Natural killer cell (primary cell): ENCODE measurements at regions of chr5 and their contacts with region 1.

Region 1: DNA sequence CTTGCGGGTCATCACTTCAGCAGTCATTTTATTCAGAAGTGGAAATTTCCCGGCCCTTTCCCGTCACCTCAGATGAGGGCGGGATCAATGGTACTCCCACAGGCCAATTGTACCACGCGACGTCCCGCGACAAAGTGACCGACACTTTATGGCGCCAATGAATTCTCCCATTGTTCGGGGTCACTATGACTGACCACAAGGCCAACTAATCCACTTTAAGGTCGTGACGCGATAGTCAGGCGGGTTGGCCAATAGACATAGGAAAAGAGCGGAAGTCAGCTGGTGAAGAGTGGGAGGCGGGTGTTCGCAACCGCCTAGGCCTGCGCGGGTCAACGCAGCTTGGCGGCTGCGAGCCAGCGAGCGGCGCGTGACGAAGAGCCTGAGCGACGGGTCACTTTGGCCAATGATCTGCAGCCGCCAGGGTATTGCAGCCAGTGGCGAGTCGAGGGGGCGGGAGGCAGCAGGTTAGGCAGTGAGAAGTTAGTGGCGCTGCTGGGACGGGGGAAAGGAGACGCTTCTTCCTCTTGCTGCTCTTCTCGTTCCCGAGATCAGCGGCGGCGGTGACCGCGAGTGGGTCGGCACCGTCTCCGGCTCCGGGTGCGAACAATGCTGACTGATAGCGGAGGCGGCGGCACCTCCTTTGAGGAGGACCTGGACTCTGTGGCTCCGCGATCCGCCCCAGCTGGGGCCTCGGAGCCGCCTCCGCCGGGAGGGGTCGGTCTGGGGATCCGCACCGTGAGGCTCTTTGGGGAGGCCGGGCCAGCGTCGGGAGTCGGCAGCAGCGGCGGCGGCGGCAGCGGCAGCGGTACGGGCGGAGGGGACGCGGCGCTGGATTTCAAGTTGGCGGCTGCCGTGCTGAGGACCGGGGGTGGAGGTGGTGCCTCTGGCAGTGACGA is at the start of gene ANKHD1:
- DNase-seq: peak; percentile 94 to 99
- ATAC-seq: peak; percentile 80 to 93 (median 81)
- H3K4me3 ChIP-seq: peak within 1 kb of the TSS; percentile 72
- H3K4me3 Mint-ChIP-seq: no peak within 1 kb of the TSS
- H3K27ac ChIP-seq: peak within 1 kb of the TSS; percentile 94
- H3K27ac Mint-ChIP-seq: no peak within 1 kb of the TSS
- H3K4me1 ChIP-seq: peaks cover 20% of the 10 kb centered on the region
- H3K4me1 Mint-ChIP-seq: peaks cover 26 to 35% of the 10 kb centered on the region in 2 donors
- H3K27me3 ChIP-seq: no peaks in the 10 kb centered on the region
- H3K27me3 Mint-ChIP-seq: no peaks in the 10 kb centered on the region
- CTCF ChIP-seq: no peak
- total RNA-seq, gene ANKHD1: 225 to 239 (median 230) TPM

Region 2: DNA sequence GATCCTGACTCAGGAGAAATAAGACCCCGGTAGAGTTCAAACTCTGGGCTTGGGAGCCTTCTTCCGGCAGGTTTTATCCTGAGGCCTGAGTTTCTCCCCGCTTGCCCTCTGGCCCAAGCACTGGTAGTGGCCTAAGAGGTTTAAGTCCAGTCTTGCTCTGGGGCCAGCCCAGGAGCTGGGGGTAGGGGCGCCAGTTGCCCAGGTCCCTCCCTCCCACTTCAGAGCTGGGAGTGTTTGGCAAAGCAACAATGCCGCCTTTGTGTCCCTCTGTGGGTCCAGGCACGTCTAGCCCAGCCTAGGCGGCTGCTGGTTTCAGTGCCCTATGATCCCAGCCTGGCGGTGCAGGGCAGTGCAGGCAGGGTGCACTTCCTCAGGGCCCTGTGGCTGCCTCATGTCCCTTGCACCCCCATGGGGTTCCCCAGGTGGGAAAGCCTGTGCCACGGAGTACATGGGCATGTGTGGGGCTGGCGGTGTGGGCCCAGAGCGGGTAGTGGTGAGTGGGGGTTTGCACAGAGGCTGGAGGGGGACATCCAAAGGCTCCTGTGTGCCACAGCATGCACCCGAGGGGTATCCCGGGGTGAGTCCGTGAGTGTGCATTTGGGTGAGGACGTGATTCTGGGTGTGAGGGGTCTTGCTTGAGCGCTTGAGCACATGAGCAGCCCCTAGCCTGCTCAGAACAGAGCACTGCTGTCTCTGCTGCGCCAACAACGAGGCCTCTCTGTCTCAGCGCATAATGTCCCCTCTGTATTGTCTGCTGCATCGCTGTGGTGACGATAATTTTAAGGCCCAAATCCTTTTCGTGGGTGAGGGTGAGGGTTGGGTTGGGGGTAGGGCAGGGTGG is 667.7 kb before region 1 on chr5:
- intact Hi-C with region 1: no loop called
- DNase-seq: no peak
- ATAC-seq: peak in 1 of 3 donors; percentile 8
- H3K4me3 ChIP-seq: no peak overlapping the region
- H3K4me3 Mint-ChIP-seq: no peak overlapping the region
- H3K27ac ChIP-seq: no peak overlapping the region
- H3K27ac Mint-ChIP-seq: no peak overlapping the region
- H3K4me1 ChIP-seq: no peaks in the 10 kb centered on the region
- H3K4me1 Mint-ChIP-seq: peaks cover 3% of the 10 kb centered on the region in 2 donors
- H3K27me3 ChIP-seq: no peaks in the 10 kb centered on the region
- H3K27me3 Mint-ChIP-seq: no peaks in the 10 kb centered on the region
- CTCF ChIP-seq: no peak

Region 3: DNA sequence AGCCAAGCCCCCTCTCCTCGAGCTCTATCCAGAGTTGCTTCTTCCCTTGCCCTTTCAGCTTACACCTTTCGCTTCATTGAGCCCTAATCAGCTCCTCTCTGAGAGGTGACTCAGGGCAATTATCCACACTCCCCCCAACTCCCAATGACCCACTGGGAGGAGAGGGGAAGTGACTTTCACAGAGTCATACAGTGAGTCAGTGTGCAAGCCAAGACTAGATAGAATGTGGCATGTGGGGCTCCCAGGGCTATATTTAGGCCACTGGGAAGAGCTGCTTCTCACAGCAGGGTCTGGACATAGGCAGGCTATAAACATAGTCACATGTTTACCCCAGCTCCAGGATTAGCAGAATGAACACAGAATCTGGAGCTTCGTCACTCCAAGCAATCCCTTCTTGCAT is 415.9 kb before region 1 on chr5:
- intact Hi-C with region 1: no loop called
- DNase-seq: no peak
- ATAC-seq: no peak
- H3K4me3 ChIP-seq: no peak overlapping the region
- H3K4me3 Mint-ChIP-seq: no peak overlapping the region
- H3K27ac ChIP-seq: no peak overlapping the region
- H3K27ac Mint-ChIP-seq: no peak overlapping the region
- H3K4me1 ChIP-seq: no peaks in the 10 kb centered on the region
- H3K4me1 Mint-ChIP-seq: no peaks in the 10 kb centered on the region
- H3K27me3 ChIP-seq: no peaks in the 10 kb centered on the region
- H3K27me3 Mint-ChIP-seq: peaks cover 15 to 34% of the 10 kb centered on the region in 2 donors
- CTCF ChIP-seq: no peak

Region 4: DNA sequence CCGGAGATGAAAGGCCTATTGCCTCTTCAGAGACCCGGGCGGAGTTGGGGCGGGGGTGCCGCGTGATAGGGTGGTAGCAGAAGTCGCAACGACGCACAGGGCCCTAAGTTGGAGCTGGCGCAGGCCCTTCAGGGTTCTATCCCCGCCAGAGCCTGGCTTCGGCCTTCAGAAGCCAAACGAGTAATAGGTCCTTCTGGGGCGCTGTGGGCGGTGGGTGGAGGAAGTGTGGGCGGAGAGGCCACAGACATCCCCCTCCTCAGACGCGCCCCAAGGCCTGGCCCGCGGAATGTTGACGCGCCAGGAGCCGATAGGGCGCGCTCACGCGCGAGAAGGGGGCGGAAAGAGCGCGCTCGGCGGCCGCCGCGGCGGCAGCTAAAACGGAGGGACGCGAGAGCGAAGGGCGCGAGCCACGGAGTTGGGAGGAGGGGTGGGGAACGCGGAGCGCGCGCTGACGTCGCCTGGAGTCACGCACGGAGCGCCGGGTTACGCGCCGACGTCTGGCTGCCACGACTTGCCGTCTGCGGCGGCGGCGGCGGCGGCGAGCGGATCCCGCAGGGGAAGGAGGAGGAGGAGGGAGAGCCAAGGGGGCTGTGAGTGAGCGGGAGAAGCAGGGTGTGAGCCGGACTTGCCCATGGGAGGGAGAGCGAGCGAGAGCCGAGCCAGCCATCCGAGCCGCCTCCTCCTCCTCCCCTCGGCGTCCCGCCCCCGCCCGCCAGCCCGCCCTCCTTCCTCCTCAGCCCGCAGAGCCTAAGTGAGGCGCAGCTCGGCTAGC is 294.1 kb before region 1 on chr5:
- intact Hi-C with region 1: loop called (anchors 5 kb)
- DNase-seq: peak; percentile 90 to 98
- ATAC-seq: peak; percentile 87 to 95 (median 88)
- H3K4me3 ChIP-seq: peak overlapping the region; percentile 52
- H3K4me3 Mint-ChIP-seq: peak overlapping the region; percentile 97
- H3K27ac ChIP-seq: peak overlapping the region; percentile 95
- H3K27ac Mint-ChIP-seq: peak overlapping the region; percentile 91 to 97
- H3K4me1 ChIP-seq: peaks cover 23% of the 10 kb centered on the region
- H3K4me1 Mint-ChIP-seq: peaks cover 31 to 39% of the 10 kb centered on the region in 2 donors
- H3K27me3 ChIP-seq: peaks cover 29% of the 10 kb centered on the region
- H3K27me3 Mint-ChIP-seq: peaks cover 26 to 38% of the 10 kb centered on the region in 2 donors
- CTCF ChIP-seq: no peak

Region 5: DNA sequence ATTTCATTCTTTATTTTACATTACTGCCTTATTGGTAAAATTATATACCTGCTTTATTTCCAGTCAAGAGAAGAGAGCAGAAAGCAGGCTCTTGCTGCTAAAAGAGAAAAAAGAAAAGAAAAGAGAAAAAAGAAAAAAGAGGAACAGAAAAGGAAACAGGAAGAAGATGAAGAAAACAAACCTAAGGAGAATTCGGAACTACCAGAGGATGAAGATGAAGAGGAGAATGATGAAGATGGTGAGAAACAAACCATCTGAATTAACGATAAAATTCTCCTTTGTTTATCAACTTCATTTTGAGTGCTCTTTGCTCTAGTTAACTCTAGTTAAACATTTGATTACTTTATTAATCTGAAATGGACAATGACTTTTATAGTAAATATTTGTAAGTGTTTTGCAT is 122.4 kb after region 1 on chr5:
- intact Hi-C with region 1: no loop called
- DNase-seq: no peak
- ATAC-seq: no peak
- H3K4me3 ChIP-seq: no peak overlapping the region
- H3K4me3 Mint-ChIP-seq: no peak overlapping the region
- H3K27ac ChIP-seq: no peak overlapping the region
- H3K27ac Mint-ChIP-seq: peak overlapping the region; percentile 60 to 72
- H3K4me1 ChIP-seq: no peaks in the 10 kb centered on the region
- H3K4me1 Mint-ChIP-seq: no peaks in the 10 kb centered on the region
- H3K27me3 ChIP-seq: no peaks in the 10 kb centered on the region
- H3K27me3 Mint-ChIP-seq: no peaks in the 10 kb centered on the region
- CTCF ChIP-seq: no peak

Region 6: GRCh38 chr5:140557136-140557805 is 155.7 kb after region 1 on chr5 and contains the start of gene SRA1:
- intact Hi-C with region 1: loop called (anchors 2 kb)
- DNase-seq: peak; percentile 89 to 90
- ATAC-seq: peak; percentile 87 to 96 (median 93)
- H3K4me3 ChIP-seq: peak within 1 kb of the TSS; percentile 86
- H3K4me3 Mint-ChIP-seq: peak within 1 kb of the TSS; percentile 84
- H3K27ac ChIP-seq: peak within 1 kb of the TSS; percentile 94
- H3K27ac Mint-ChIP-seq: peak within 1 kb of the TSS; percentile 96
- H3K4me1 ChIP-seq: peaks cover 23% of the 10 kb centered on the region
- H3K4me1 Mint-ChIP-seq: peaks cover 47 to 53% of the 10 kb centered on the region in 2 donors
- H3K27me3 ChIP-seq: no peaks in the 10 kb centered on the region
- H3K27me3 Mint-ChIP-seq: no peaks in the 10 kb centered on the region
- CTCF ChIP-seq: no peak
- total RNA-seq, gene SRA1: 42.2 to 66.4 (median 59.4) TPM

Region 7: DNA sequence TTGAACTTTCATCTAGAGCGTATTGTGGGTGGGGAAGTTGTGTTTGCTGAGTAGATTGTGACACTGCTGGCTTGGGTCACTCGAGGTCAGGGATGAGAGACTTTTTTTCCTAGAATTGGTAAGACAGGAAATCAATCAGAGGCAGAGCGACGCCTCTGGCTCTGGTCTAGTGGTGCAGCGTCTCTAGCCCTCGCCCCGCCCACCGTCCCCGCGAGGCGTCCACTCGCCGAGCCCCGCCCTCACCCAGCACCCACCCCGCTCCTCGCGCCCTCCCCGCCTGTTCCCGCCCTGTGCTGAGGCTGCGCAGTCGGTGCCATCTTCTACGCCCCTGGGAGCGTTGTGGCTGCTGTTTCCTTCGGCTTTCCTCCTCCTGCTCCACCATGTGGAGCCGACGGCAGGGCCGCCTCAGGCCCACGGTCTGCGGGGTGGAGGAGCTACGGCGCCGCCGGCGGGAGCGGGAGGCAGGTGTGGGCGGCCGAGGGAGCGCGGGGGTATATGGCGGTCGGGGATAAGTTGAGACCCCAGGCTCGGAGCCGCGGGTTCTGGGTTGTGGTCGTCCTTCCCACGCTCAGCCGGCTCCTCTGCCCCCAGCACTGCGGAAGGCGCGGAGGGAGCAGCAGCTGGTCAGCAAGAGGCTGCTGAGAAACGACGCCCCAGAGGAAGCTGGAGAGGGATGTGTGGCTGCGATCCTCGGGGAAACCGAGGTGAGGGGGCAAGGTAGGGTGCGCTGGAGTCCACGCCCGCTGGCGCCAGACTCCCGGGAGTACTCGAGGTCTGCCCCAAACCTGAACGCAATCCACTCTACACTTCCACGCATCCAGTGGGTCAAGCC is 237.8 kb after region 1 on chr5 and contains the start of gene TMCO6:
- intact Hi-C with region 1: loop called (anchors 2 kb)
- DNase-seq: peak; percentile 94 to 98
- ATAC-seq: peak; percentile 98 to 100 (median 99)
- H3K4me3 ChIP-seq: peak within 1 kb of the TSS; percentile 65
- H3K4me3 Mint-ChIP-seq: peak within 1 kb of the TSS; percentile 92
- H3K27ac ChIP-seq: peak within 1 kb of the TSS; percentile 84
- H3K27ac Mint-ChIP-seq: peak within 1 kb of the TSS; percentile 93 to 95
- H3K4me1 ChIP-seq: peaks cover 18% of the 10 kb centered on the region
- H3K4me1 Mint-ChIP-seq: peaks cover 15 to 35% of the 10 kb centered on the region in 2 donors
- H3K27me3 ChIP-seq: no peaks in the 10 kb centered on the region
- H3K27me3 Mint-ChIP-seq: no peaks in the 10 kb centered on the region
- CTCF ChIP-seq: peak; percentile 61
- total RNA-seq, gene TMCO6: 17.9 to 19.5 (median 18.8) TPM

Region 8: DNA sequence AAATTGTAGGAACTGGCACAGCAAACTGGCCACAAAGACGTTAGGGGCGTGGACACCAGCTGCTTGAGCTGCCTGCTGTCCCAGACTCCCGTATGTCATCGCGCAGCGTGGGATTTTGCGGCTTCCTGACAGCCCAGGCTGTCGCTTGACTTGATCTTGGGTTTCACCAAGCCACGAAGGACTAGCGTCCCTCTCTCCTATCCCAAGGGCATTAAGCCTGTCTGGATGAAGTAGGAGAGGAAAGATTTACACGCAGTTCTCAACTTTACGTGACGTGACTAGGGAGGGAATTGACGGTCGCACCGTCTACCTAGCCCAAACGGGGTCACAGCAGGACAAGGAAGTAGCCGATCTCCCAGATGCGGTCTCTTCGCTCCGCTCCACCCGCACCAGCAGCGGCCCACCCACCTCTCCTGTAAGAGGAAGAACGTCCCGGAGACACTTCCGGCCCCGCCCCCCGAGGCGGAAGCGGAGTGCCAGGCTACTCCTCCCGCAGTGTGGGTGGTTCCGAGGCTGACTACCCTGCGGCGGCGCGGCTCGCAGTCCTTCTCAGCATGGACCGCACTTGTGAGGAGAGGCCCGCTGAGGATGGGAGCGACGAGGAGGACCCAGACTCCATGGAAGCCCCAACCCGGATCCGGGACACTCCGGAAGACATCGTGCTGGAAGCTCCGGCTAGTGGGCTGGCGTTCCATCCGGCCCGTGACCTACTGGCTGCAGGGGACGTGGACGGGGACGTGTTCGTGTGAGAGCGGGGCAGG is 262.9 kb after region 1 on chr5 and contains the start of gene WDR55:
- intact Hi-C with region 1: loop called (anchors 1 kb)
- DNase-seq: peak; percentile 86 to 97
- ATAC-seq: peak; percentile 95 to 97 (median 95)
- H3K4me3 ChIP-seq: peak within 1 kb of the TSS; percentile 99
- H3K4me3 Mint-ChIP-seq: peak within 1 kb of the TSS; percentile 99
- H3K27ac ChIP-seq: peak within 1 kb of the TSS; percentile 90
- H3K27ac Mint-ChIP-seq: peak within 1 kb of the TSS; percentile 96
- H3K4me1 ChIP-seq: peaks cover 21% of the 10 kb centered on the region
- H3K4me1 Mint-ChIP-seq: peaks cover 33 to 38% of the 10 kb centered on the region in 2 donors
- H3K27me3 ChIP-seq: no peaks in the 10 kb centered on the region
- H3K27me3 Mint-ChIP-seq: no peaks in the 10 kb centered on the region
- CTCF ChIP-seq: no peak
- total RNA-seq, gene WDR55: 42.3 to 45.1 (median 43.3) TPM

Region 9: GRCh38 chr5:140710899-140711552 is 309.4 kb after region 1 on chr5:
- intact Hi-C with region 1: loop called (anchors 1 kb)
- DNase-seq: peak; percentile 77 to 95
- ATAC-seq: peak; percentile 85 to 93 (median 86)
- H3K4me3 ChIP-seq: peak overlapping the region; percentile 98
- H3K4me3 Mint-ChIP-seq: peak overlapping the region; percentile 100
- H3K27ac ChIP-seq: peak overlapping the region; percentile 91
- H3K27ac Mint-ChIP-seq: peak overlapping the region; percentile 99 to 100
- H3K4me1 ChIP-seq: peaks cover 9% of the 10 kb centered on the region
- H3K4me1 Mint-ChIP-seq: peaks cover 13 to 26% of the 10 kb centered on the region in 2 donors
- H3K27me3 ChIP-seq: no peaks in the 10 kb centered on the region
- H3K27me3 Mint-ChIP-seq: peaks cover 6 to 10% of the 10 kb centered on the region in 2 donors
- CTCF ChIP-seq: no peak